Mammary epithelial cell (primary cell): ENCODE measurements at regions of chr15 and their contacts with region 1.

Region 1: DNA sequence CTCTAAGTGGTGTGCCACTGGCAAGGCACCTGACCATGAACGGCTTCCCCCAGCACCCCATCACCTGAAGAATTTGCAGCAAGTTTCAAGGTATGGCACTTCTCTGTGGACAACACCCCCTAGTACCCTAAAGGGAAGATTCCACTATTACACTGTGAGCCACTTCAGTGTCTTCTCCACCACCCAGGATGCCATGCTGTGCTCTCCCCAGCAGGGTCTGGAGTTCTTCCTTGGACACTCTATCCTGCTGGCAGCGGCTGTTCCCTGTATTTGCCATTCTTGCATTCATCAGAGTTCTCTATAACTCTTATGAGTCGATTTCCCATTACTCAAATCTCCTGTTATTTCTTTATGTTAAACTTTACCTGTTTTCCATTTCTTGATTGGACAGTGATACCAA is 33.9 kb upstream of the RNU6-1 start:
- DNase-seq: no peak
- H3K4me3 ChIP-seq: no peak overlapping the region
- H3K27ac ChIP-seq: no peak overlapping the region
- H3K4me1 ChIP-seq: no peaks in the 10 kb centered on the region
- H3K27me3 ChIP-seq: no peaks in the 10 kb centered on the region
- CTCF ChIP-seq: no peak

Region 2: DNA sequence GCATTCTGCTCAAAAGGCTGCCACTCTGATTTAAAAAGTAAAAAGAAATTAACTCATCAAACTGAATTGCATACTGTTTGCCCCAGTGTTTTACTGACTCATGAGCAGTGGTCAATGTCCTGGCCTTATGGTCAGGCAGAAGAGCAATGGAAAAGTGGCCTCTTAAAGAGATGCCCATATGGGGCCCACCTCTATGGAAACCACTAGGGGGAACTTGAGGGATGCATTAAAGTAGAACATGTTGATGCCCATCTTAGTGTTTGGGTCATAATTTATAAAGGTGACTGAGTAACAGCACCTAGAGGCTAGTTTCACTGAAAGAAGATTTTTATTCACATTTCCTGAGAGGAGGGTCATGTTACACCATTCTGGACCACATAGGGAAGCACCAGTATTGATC is 32.6 kb after region 1 on chr15:
- CTCF ChIA-PET with region 1: no interaction called
- dilution Hi-C with region 1: loop called (anchors 5 kb)
- in situ Hi-C with region 1: no loop called
- intact Hi-C with region 1: no loop called
- DNase-seq: peak; percentile 12
- H3K4me3 ChIP-seq: no peak overlapping the region
- H3K27ac ChIP-seq: no peak overlapping the region
- H3K4me1 ChIP-seq: no peaks in the 10 kb centered on the region
- H3K27me3 ChIP-seq: no peaks in the 10 kb centered on the region
- CTCF ChIP-seq: peak; percentile 20 to 24

Region 3: GRCh38 chr15:68038246-68038645 is 164.5 kb after region 1 on chr15:
- CTCF ChIA-PET with region 1: no interaction called
- dilution Hi-C with region 1: loop called (anchors 5 kb)
- in situ Hi-C with region 1: no loop called
- intact Hi-C with region 1: no loop called
- DNase-seq: no peak
- H3K4me3 ChIP-seq: no peak overlapping the region
- H3K27ac ChIP-seq: no peak overlapping the region
- H3K4me1 ChIP-seq: no peaks in the 10 kb centered on the region
- H3K27me3 ChIP-seq: no peaks in the 10 kb centered on the region
- CTCF ChIP-seq: no peak